ENCODE measurements at regions of chr10 and their contacts with region 1.

Region 1: DNA sequence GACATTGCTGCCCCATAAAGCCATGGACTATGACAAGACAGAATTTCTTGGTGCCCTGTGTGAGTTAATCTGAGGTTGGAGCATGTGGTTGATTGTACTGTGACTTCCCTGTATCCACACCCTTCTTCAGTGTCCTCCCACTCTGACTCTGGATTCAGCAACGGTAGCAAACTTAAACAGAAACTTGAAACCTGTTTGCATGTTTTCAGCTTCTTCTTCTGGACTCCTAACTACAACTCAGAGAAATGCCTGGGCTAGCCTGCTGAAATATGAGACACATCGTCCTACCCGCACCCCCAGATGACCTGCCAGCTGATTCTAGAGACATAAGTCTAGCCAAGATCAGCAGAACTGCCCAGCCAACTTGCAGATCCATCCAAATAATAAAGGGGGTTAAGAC is 78.4 kb downstream of the IPMK start:
- DNase-seq: no peak
- CTCF ChIP-seq: no peak

Region 2: DNA sequence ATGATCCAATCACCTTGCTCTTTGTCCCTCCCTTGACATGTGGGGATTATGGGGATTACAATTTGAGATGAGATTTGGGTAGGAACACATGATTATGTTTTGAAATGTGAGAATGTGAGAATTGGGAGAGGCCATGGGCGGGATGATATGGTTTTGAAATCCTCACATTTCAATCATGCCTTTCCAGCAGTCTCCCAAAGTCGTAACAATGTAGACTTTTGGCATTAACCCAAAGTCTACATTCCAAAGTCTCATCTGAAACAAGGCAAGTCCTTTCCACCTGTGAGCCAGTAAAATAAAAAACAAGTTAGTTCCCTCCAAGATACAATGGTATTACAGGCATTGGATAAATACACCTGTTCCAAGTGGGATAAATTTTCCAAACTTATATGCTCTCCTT is 978.1 kb before region 1 on chr10:
- in situ Hi-C with region 1: no loop called
- DNase-seq: no peak
- CTCF ChIP-seq: no peak

Region 3: DNA sequence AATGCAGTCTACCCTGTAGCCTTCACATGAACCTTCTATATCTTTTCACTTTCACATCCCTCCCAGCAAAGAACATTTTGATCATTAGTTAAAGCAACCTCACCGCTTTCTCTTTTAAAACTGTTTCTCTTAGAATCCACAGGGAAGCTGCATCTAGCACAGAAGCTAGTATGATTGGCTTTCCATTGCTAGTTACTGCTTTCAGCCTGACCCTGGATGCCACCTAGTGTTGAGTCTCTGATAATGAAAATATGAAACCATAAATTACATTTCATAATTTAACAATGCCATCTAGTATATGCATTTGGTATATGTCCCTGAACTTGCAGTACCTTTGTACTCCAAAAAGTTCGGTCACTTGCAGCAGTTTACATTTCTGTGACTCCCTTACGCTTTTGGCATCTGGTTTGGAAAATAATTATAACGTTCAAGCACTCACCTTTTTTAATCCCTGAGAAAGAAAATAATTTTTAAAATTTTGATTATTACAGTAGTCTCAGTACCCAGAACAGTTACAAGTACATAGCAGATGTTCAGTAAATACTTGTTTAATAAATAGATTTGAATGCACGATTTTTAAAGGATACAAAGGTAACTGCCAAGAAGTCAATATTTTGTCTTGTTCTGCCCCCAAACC is 102.4 kb after region 1 on chr10:
- in situ Hi-C with region 1: loop called (anchors 5 kb)
- DNase-seq: peak; percentile 46
- CTCF ChIP-seq: peak; percentile 45